MCF 10A (cell line): ENCODE measurements at regions of chr19 and their contacts with region 1.

Region 1: DNA sequence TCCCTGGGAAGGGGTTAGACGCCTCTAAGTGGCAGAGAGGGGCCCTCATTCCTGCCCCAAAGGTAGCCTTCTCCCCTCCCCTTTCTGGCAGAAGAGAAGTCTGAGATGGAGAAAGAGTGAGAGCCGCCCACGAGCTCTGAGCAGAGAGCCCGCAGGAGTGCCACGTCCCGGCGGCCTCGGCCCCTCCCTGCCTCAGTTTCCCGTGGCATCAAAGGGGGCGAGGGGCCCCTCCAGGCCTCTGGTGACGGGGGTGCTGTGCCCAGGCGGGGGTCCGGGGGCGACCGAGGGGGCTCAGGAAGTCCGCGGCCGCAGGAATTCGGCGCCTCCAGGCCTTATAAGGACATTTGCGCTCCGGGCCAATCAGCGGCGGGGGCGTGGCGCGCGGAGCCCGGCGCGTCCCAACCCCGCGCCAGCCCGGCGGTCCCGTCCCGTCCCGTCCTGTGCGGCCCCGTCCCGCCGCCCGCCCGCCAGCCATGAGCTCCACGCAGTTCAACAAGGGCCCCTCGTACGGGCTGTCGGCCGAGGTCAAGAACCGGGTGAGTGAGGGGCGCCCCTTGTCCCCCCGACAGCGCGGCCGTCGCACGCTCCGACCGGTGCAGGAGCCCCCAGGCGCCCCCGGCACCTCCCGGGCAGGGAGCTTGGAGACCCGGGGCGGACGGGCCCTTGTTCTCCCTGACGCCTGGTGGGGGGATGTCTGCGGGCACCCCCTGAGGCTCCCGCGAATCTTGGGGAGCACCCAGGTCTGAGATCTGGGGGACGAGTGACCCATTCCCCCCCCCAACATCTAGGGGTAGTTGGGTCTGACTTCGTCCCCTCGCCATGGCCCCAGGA is at the start of gene CNN2:
- DNase-seq: peak; percentile 80
- H3K4me3 Mint-ChIP-seq: peak within 1 kb of the TSS; percentile 86
- H3K27ac Mint-ChIP-seq: peak within 1 kb of the TSS; percentile 96
- H3K4me1 Mint-ChIP-seq: peaks cover 12% of the 10 kb centered on the region
- H3K27me3 Mint-ChIP-seq: no peaks in the 10 kb centered on the region
- CTCF ChIP-seq: no peak
- total RNA-seq, gene CNN2: 112 and 166 TPM in 2 replicates

Region 2: GRCh38 chr19:821825-822503 is 204.4 kb before region 1 on chr19 and contains the start of gene PLPPR3:
- CTCF ChIA-PET with region 1: no interaction called
- POLR2A ChIA-PET with region 1: no interaction called
- intact Hi-C with region 1: no loop called
- DNase-seq: no peak
- H3K4me3 Mint-ChIP-seq: no peak within 1 kb of the TSS
- H3K27ac Mint-ChIP-seq: no peak within 1 kb of the TSS
- H3K4me1 Mint-ChIP-seq: peaks cover 8% of the 10 kb centered on the region
- H3K27me3 Mint-ChIP-seq: no peaks in the 10 kb centered on the region
- CTCF ChIP-seq: no peak
- total RNA-seq, gene PLPPR3: not detected in 2 replicates

Region 3: DNA sequence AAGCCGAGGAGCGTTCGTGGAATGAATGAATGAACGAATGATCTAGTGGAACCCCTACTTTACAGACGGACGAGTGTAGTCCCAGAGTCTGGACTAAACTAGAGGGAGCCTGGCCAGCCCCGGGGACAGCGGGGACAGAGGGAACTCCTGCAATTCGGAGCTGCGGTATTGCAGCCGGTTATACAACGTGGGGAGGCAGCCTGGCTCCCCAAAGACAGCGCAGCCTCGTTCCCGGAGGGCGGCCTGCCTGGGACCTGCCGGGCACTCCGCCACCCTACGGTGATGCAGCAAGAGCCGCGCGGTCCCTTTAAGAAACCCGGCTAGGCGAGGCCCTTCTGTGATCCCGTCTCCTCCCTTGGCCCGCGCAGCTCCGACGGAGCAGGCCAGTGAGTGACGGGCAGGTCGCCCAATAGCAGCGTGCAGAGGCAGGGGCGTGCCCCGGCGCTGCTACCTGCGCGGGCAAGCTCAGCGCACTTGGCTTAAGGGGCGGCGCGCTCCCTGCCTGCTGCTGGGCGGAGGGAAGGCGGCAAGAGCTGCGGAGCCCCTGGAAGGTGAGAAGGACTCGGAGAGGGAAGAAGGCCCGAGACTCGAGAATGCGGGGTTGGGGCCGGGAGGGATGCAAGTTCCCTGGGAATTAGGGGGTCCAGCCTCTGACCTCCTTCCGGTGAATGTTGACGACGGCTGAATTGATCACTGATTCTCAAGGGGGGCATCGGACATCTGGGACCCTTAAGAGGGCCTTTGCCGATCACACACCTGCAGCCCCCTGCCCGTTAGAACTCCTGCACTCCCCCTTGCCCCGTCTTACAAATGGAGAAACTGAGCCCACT is 13.5 kb after region 1 on chr19 and contains the start of gene ABCA7:
- CTCF ChIA-PET with region 1: interaction called, 3 read pairs
- POLR2A ChIA-PET with region 1: interaction called, 97 read pairs
- intact Hi-C with region 1: no loop called
- DNase-seq: peak; percentile 98
- H3K4me3 Mint-ChIP-seq: peak within 1 kb of the TSS; percentile 92
- H3K27ac Mint-ChIP-seq: peak within 1 kb of the TSS; percentile 67
- H3K4me1 Mint-ChIP-seq: peaks cover 10% of the 10 kb centered on the region
- H3K27me3 Mint-ChIP-seq: no peaks in the 10 kb centered on the region
- CTCF ChIP-seq: no peak
- total RNA-seq, gene ABCA7: 10.3 and 18.2 TPM in 2 replicates

Region 4: GRCh38 chr19:1064661-1065605 is 38.5 kb after region 1 on chr19:
- CTCF ChIA-PET with region 1: interaction called, 5 read pairs
- POLR2A ChIA-PET with region 1: interaction called, 31 read pairs
- intact Hi-C with region 1: no loop called
- DNase-seq: peak; percentile 74
- H3K4me3 Mint-ChIP-seq: peak overlapping the region; percentile 72
- H3K27ac Mint-ChIP-seq: no peak overlapping the region
- H3K4me1 Mint-ChIP-seq: peaks cover 23% of the 10 kb centered on the region
- H3K27me3 Mint-ChIP-seq: no peaks in the 10 kb centered on the region
- CTCF ChIP-seq: peak; percentile 79

Region 5: DNA sequence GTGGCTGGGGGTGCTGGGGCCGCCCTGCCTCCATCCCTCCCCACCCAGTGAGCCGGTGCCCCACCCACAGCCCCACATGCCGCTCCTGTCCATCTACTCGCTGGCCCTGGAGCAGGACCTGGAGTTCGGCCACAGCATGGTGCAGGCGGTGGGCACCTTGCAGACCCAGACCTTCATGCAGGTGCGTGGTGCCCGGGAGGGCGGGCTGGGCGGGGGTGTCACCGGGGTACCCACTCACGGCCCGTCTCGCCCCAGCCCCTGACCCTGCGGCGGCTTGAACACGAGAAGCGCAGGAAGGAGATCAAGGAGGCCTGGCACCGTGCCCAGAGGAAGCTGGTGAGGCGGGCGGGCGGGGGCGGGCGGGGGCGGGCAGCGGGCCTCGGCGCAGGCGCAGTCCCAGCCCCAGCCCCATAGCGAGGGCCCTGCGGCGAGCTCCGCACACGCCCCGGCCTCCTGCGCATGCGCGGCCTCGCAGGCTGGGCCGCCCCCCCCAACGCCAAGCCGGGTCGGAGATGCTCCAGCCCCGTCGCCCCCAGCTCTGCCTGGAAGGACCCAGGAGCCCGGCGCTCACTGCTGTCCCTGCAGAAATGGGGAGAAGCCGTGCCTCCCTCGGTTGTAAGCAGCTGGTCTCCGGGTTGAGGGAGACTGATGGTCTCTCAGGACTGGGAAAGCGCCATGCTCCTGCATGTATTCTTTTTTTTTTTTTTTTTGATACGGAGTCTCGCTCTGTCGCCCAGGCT is 48.3 kb after region 1 on chr19:
- CTCF ChIA-PET with region 1: no interaction called
- POLR2A ChIA-PET with region 1: interaction called, 12 read pairs
- intact Hi-C with region 1: no loop called
- DNase-seq: peak; percentile 87
- H3K4me3 Mint-ChIP-seq: no peak overlapping the region
- H3K27ac Mint-ChIP-seq: no peak overlapping the region
- H3K4me1 Mint-ChIP-seq: peaks cover 8% of the 10 kb centered on the region
- H3K27me3 Mint-ChIP-seq: no peaks in the 10 kb centered on the region
- CTCF ChIP-seq: no peak

Region 6: DNA sequence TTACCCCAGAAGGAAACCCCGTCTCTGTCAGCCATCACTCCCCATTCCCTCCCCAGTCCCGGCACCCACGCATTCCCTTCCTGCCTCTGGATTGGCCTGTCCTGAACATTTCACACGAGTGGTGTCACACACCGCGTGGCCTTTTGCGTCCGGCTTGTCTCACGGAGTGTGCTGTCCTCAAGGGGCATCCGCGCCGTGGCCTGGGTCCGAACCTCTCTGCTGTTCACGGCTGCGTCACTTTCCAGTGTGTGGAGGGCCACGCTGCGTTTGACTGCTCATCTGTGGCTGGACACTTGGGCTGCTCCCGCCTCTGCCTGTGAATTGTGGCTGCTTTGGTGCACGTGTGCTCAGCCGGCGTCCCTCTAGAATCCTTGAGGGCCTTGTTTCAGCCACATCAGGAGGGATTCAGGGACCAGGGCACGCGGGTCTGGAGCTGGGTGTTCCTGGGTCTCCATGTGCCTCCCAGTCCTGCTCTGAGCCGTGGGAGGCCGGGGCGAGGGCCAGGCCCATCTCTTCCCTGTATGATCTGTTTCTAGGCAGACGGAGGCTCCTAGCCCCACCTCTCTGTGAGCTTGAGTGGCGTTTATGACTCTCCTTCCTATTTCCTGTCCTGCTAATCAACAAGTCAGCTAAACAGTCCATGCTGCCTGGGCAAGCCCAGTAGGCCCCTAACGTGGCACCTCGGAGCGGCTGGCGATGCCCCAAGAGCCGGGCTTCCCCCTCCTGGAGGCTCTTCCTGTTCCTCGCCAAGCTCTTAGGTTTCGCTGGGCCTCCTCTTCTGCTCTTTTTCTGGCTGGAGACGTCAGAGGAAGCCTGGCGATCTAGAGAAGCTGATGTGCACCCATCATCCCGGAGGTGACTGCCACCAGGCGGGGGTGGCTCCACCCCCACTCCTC is 187.2 kb after region 1 on chr19:
- CTCF ChIA-PET with region 1: no interaction called
- POLR2A ChIA-PET with region 1: interaction called, 13 read pairs
- intact Hi-C with region 1: no loop called
- DNase-seq: peak; percentile 91
- H3K4me3 Mint-ChIP-seq: peak overlapping the region; percentile 63
- H3K27ac Mint-ChIP-seq: peak overlapping the region; percentile 89
- H3K4me1 Mint-ChIP-seq: peaks cover 46% of the 10 kb centered on the region
- H3K27me3 Mint-ChIP-seq: no peaks in the 10 kb centered on the region
- CTCF ChIP-seq: no peak

Region 7: DNA sequence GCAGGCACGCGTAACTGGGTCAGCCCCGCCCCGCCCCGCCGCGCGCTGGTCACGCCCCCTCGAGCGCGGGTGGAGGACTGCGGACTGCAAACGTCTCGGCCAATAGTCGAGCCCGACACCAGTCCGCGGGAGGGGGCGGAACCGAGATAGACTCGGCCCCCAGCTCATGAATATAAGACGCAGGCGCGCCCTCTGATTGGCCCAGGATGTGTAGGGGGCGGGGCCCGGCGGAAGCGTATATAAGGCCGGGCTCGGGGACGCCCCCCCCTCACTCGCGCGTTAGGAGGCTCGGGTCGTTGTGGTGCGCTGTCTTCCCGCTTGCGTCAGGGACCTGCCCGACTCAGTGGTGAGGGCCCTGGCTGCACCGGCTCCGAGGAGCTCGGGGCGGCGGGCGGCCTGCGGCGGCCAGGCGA is 242.7 kb after region 1 on chr19 and contains the start of gene CIRBP:
- CTCF ChIA-PET with region 1: interaction called, 3 read pairs
- POLR2A ChIA-PET with region 1: interaction called, 14 read pairs
- intact Hi-C with region 1: no loop called
- DNase-seq: peak; percentile 99
- H3K4me3 Mint-ChIP-seq: peak within 1 kb of the TSS; percentile 84
- H3K27ac Mint-ChIP-seq: peak within 1 kb of the TSS; percentile 89
- H3K4me1 Mint-ChIP-seq: peaks cover 24% of the 10 kb centered on the region
- H3K27me3 Mint-ChIP-seq: no peaks in the 10 kb centered on the region
- CTCF ChIP-seq: no peak
- total RNA-seq, gene CIRBP: 316 and 362 TPM in 2 replicates